ENCODE measurements at regions of chr2 and their contacts with region 1.

Region 1: GRCh38 chr2:12931186-12931844 is 214.6 kb downstream of the TRIB2 start:
- DNase-seq: peak; percentile 3
- ATAC-seq: peak; percentile 92
- H3K4me3 ChIP-seq: no peak overlapping the region
- H3K27ac ChIP-seq: no peak overlapping the region
- H3K4me1 ChIP-seq: no peaks in the 10 kb centered on the region
- H3K27me3 ChIP-seq: no peaks in the 10 kb centered on the region
- CTCF ChIP-seq: peak; percentile 77
- EP300 ChIP-seq: no peak
- POLR2A ChIP-seq: no peak
- RAD21 ChIP-seq: 0 out of 2 replicates have a peak, but pooled peaks have one; percentile 31

Region 2: GRCh38 chr2:12416600-12416999 is 514.7 kb before region 1 on chr2:
- CTCF ChIA-PET with region 1: no interaction called
- POLR2A ChIA-PET with region 1: no interaction called
- in situ Hi-C with region 1: no loop called
- intact Hi-C with region 1: loop called (anchors 5 kb)
- DNase-seq: peak; percentile 11
- ATAC-seq: peak; percentile 65
- H3K4me3 ChIP-seq: no peak overlapping the region
- H3K27ac ChIP-seq: no peak overlapping the region
- H3K4me1 ChIP-seq: no peaks in the 10 kb centered on the region
- H3K27me3 ChIP-seq: no peaks in the 10 kb centered on the region
- CTCF ChIP-seq: peak; percentile 52
- EP300 ChIP-seq: no peak
- POLR2A ChIP-seq: no peak
- RAD21 ChIP-seq: no peak